ENCODE measurements at regions of chr1 and their contacts with region 1.

Region 1: GRCh38 chr1:225638853-225639252 is 14.1 kb downstream of the ENAH start:
- DNase-seq: peak in 1 of 2 experiments; percentile 36
- H3K4me3 ChIP-seq: no peak overlapping the region
- H3K4me3 Mint-ChIP-seq: no peak overlapping the region
- H3K27ac Mint-ChIP-seq: no peak overlapping the region
- H3K4me1 ChIP-seq: peaks cover 12% of the 10 kb centered on the region
- H3K4me1 Mint-ChIP-seq: peaks cover 20% of the 10 kb centered on the region
- H3K27me3 ChIP-seq: no peaks in the 10 kb centered on the region
- H3K27me3 Mint-ChIP-seq: no peaks in the 10 kb centered on the region
- CTCF ChIP-seq: no peak

Region 2: GRCh38 chr1:225627304-225627947 is 11.4 kb before region 1 on chr1:
- CTCF ChIA-PET with region 1: no interaction called
- POLR2A ChIA-PET with region 1: no interaction called
- intact Hi-C with region 1: loop called (anchors 1 kb)
- DNase-seq: no peak
- H3K4me3 ChIP-seq: no peak overlapping the region
- H3K4me3 Mint-ChIP-seq: no peak overlapping the region
- H3K27ac Mint-ChIP-seq: peak overlapping the region; percentile 28
- H3K4me1 ChIP-seq: peaks cover 24% of the 10 kb centered on the region
- H3K4me1 Mint-ChIP-seq: peaks cover 8% of the 10 kb centered on the region
- H3K27me3 ChIP-seq: no peaks in the 10 kb centered on the region
- H3K27me3 Mint-ChIP-seq: no peaks in the 10 kb centered on the region
- CTCF ChIP-seq: no peak

Measured in Caco-2 (cell line).